Upper lobe of right lung (tissue), 1 donor: ENCODE measurements at regions of chr3 and their contacts with region 1.

Region 1: GRCh38 chr3:195522254-195523023 is 20.7 kb downstream of the PPP1R2 start:
- DNase-seq: no peak
- ATAC-seq: peak; percentile 24
- H3K4me3 ChIP-seq: no peak overlapping the region
- H3K27ac ChIP-seq: no peak overlapping the region
- H3K4me1 ChIP-seq: no peaks in the 10 kb centered on the region
- H3K27me3 ChIP-seq: no peaks in the 10 kb centered on the region
- CTCF ChIP-seq: peak; percentile 77

Region 2: DNA sequence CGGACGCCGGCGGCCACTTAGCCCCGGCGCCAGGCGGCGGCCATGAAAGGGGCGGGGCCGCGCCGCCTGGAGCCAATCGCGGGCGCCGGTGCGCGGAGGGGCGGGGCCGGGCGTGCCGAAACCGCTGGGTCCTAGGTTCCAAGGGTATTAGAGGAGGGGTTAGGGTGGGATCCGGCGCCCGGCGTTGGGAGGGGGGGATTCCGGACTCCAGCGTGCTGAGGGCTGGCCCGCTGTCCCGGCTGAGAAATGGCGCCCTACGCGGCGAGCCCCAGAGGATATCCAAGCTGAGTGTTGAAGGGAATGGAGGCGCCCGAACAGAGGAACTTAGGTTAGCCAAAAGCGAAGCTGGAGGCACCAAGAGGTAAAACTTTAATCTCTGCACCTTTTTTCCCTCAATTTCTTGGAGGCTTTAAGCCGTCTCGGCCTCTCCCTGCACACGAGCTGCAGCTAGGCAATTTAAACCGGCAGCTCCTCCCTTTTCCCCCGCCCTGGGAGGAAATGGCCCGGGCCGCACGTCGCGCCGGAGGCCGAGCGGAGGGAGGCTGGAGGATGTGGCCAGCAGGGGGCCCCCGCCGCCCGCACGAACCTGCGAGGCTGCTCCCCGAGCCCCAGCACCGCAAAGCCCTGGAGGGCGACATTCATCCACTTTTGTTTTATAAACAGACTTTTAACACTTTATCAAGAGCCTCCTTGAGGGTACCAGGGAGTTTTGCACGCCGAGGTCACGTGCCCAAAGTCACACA is 251.2 kb before region 1 on chr3 and contains the start of gene XXYLT1:
- intact Hi-C with region 1: loop called (anchors 10 kb)
- DNase-seq: peak; percentile 96
- ATAC-seq: peak; percentile 96
- H3K4me3 ChIP-seq: peak within 1 kb of the TSS; percentile 89
- H3K27ac ChIP-seq: peak within 1 kb of the TSS; percentile 85
- H3K4me1 ChIP-seq: peaks cover 22% of the 10 kb centered on the region
- H3K27me3 ChIP-seq: no peaks in the 10 kb centered on the region
- CTCF ChIP-seq: peak; percentile 97
- total RNA-seq, gene XXYLT1: 9.8 TPM

Region 3: GRCh38 chr3:195458316-195458717 is 64.1 kb before region 1 on chr3:
- intact Hi-C with region 1: no loop called
- DNase-seq: no peak
- ATAC-seq: peak; percentile 81
- H3K4me3 ChIP-seq: no peak overlapping the region
- H3K27ac ChIP-seq: no peak overlapping the region
- H3K4me1 ChIP-seq: peaks cover 5% of the 10 kb centered on the region
- H3K27me3 ChIP-seq: no peaks in the 10 kb centered on the region
- CTCF ChIP-seq: no peak

Region 4: GRCh38 chr3:195873971-195874370 is 351.5 kb after region 1 on chr3:
- intact Hi-C with region 1: no loop called
- DNase-seq: peak; percentile 69
- ATAC-seq: peak; percentile 39
- H3K4me3 ChIP-seq: no peak overlapping the region
- H3K27ac ChIP-seq: no peak overlapping the region
- H3K4me1 ChIP-seq: peaks cover 5% of the 10 kb centered on the region
- H3K27me3 ChIP-seq: no peaks in the 10 kb centered on the region
- CTCF ChIP-seq: no peak